ENCODE measurements at regions of chr12 and their contacts with region 1.

Region 1: DNA sequence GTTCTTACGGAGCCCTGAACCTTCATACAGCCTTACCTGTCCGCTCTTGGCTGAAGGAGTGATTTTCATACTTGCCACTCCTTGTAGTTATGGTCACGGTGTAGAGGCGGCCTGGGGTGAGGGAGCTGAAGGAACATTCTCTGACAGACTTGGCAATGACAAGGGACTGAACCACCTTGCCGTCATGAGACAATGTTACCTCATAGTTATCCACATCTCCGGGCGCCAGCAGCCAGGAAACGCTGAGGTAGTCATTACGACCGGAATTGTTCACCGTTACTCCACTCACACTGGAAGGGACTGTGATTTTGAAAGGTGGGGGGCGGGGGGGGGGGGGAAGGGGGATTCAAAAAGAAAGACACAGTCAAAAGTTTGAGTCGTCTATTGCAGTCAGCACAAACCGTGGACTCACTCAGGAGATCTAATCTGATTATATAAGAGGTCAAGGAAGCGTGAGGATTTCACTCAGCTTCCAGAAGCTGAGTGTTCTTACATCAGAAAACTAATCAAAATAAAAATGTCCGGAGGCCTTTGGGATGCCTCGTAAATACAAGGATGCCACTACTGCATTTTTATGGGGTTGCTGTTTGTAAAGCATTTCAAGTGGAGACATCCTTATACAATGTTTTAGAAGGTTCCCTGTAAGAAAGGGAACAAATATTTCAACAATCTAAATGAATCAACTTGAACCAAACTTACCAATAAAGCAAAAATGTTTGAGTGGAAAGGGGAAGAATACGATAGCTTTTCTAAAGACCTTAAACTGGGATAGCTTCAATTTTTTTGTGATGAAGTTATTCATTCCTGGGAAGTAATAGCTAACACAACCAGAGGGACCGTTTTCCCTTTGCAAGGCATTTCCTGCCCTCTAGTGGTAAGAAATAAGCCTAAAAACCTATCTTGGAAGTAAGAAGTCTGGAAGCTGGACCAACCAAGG is 60.6 kb downstream of the PTPRB start:
- DNase-seq: peak; percentile 51 to 75
- ATAC-seq: peak; percentile 93 to 98
- H3K4me3 ChIP-seq: no peak overlapping the region
- H3K27ac ChIP-seq: no peak overlapping the region
- H3K4me1 ChIP-seq: no peaks in the 10 kb centered on the region
- CTCF ChIP-seq: peak; percentile 90
- EP300 ChIP-seq: no peak
- POLR2A ChIP-seq: no peak
- RAD21 ChIP-seq: peak; percentile 93 to 96

Region 2: DNA sequence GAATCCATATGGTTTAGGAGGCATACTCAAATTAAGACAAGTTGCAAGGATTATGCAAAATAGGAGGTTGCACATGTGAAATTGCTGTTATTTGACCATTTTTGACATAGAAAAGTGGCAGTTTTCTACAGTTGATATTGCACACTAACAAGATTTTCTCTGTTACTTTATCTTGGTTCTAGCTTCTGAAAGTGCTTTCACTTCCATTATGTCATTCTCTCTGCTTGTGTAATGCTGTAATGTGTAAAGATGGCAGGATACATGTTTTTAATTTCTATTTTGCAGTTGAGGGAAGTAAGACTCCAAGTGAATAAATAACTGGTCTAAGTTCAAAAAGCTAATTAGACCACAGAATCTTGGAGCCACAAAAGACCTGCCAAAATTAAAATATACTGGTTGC is 691.0 kb before region 1 on chr12:
- CTCF ChIA-PET with region 1: interaction called, 57 read pairs
- POLR2A ChIA-PET with region 1: no interaction called
- DNase-seq: no peak
- ATAC-seq: no peak
- H3K4me3 ChIP-seq: no peak overlapping the region
- H3K27ac ChIP-seq: no peak overlapping the region
- H3K4me1 ChIP-seq: no peaks in the 10 kb centered on the region
- CTCF ChIP-seq: no peak
- EP300 ChIP-seq: no peak
- POLR2A ChIP-seq: no peak
- RAD21 ChIP-seq: no peak

Region 3: GRCh38 chr12:69900720-69901131 is 675.9 kb before region 1 on chr12:
- CTCF ChIA-PET with region 1: interaction called, 92 read pairs
- POLR2A ChIA-PET with region 1: no interaction called
- DNase-seq: peak; percentile 31 to 64
- ATAC-seq: peak; percentile 81 to 84; a peak in 5 of 6 replicates
- H3K4me3 ChIP-seq: no peak overlapping the region
- H3K27ac ChIP-seq: no peak overlapping the region
- H3K4me1 ChIP-seq: no peaks in the 10 kb centered on the region
- CTCF ChIP-seq: peak; percentile 92
- EP300 ChIP-seq: no peak
- POLR2A ChIP-seq: no peak
- RAD21 ChIP-seq: peak; percentile 92 to 94

Region 4: GRCh38 chr12:70660620-70661219 is 84.1 kb after region 1 on chr12:
- CTCF ChIA-PET with region 1: no interaction called
- POLR2A ChIA-PET with region 1: no interaction called
- DNase-seq: peak in 1 of 2 experiments; percentile 54
- ATAC-seq: peak in 1 of 2 experiments; percentile 56; a peak in 1 of 6 replicates
- H3K4me3 ChIP-seq: no peak overlapping the region
- H3K27ac ChIP-seq: no peak overlapping the region
- H3K4me1 ChIP-seq: peaks cover 14% of the 10 kb centered on the region; the same call in 2 of the 3 replicates
- CTCF ChIP-seq: no peak
- EP300 ChIP-seq: no peak
- POLR2A ChIP-seq: no peak
- RAD21 ChIP-seq: no peak

Measured in A549 (cell line).